Esophagus muscularis mucosa (tissue), 4 donors: ENCODE measurements at regions of chr4 and their contacts with region 1.

Region 1: DNA sequence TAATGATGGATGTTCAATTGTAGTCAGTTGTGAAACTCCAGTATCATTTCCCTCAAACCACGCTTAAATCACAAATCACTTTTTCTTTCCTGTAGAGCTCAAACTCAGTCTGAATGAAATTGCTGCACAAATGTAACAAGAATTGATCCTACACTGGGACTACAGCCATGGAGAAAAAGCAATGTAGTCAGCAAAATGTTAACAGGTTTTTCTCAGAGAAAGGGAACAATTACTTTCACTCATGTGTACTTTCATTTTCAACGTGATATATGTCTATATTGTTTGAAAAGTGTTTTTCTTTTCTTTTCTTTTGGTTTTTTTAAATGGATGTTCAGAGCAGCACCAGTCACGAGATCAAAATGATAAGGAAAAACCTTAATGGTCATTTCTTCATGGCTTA is 22.7 kb downstream of the SDAD1 start:
- DNase-seq: no peak
- H3K4me3 ChIP-seq: no peak overlapping the region
- H3K27ac ChIP-seq: no peak overlapping the region
- H3K4me1 ChIP-seq: no peaks in the 10 kb centered on the region
- H3K27me3 ChIP-seq: no peaks in the 10 kb centered on the region
- CTCF ChIP-seq: no peak
- EP300 ChIP-seq: no peak
- POLR2A ChIP-seq: no peak

Region 2: DNA sequence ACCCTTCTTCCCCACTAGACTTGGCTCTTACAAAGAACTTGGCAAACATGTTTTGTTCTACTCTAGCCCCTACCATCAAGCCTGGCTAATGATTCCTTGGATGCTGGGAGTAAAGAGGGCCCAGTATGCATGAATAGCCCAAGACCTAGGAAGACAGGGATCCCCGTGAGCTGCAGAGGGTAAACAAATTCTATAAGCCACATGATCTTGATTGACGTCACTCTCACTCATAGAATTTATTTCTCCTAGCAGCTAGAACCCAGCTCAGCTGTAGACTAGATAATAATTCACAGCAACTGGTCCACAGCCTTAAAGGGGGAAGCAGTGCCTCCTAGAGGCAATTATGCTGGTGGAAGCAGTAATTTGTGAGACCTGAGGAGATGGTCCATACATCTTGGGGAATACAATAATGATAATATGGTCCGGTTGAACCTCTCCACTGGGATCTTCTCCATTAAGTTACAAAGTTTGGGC is 259.8 kb before region 1 on chr4:
- intact Hi-C with region 1: no loop called
- DNase-seq: no peak
- H3K4me3 ChIP-seq: no peak overlapping the region
- H3K27ac ChIP-seq: no peak overlapping the region
- H3K4me1 ChIP-seq: no peaks in the 10 kb centered on the region
- H3K27me3 ChIP-seq: no peaks in the 10 kb centered on the region
- CTCF ChIP-seq: peak in 2 of 3 experiments; percentile 25 to 41
- EP300 ChIP-seq: no peak
- POLR2A ChIP-seq: no peak

Region 3: DNA sequence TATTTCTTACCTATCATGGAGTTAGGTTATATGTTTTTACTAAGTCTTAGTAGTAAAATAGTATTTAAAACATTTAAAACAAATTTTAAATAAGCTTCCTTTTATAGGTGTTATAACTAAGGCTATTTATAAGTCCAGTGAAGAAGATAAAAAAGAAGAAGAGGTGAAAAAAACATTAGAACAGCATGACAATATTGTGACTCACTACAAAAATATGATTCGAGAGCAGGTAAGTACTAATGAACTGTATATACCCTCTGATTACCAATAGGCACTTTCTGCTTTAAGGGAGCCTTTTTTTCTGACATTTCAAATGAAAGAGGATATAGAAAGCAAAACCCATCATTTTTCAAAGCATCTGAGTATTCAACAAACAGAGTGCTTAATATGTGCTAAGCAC is 167.1 kb before region 1 on chr4:
- intact Hi-C with region 1: loop called (anchors 10 kb)
- DNase-seq: no peak
- H3K4me3 ChIP-seq: no peak overlapping the region
- H3K27ac ChIP-seq: no peak overlapping the region
- H3K4me1 ChIP-seq: no peaks in the 10 kb centered on the region
- H3K27me3 ChIP-seq: no peaks in the 10 kb centered on the region
- CTCF ChIP-seq: no peak
- EP300 ChIP-seq: no peak
- POLR2A ChIP-seq: no peak